Tibial artery (tissue), 4 donors: ENCODE measurements at regions of chr11 and their contacts with region 1.

Region 1: DNA sequence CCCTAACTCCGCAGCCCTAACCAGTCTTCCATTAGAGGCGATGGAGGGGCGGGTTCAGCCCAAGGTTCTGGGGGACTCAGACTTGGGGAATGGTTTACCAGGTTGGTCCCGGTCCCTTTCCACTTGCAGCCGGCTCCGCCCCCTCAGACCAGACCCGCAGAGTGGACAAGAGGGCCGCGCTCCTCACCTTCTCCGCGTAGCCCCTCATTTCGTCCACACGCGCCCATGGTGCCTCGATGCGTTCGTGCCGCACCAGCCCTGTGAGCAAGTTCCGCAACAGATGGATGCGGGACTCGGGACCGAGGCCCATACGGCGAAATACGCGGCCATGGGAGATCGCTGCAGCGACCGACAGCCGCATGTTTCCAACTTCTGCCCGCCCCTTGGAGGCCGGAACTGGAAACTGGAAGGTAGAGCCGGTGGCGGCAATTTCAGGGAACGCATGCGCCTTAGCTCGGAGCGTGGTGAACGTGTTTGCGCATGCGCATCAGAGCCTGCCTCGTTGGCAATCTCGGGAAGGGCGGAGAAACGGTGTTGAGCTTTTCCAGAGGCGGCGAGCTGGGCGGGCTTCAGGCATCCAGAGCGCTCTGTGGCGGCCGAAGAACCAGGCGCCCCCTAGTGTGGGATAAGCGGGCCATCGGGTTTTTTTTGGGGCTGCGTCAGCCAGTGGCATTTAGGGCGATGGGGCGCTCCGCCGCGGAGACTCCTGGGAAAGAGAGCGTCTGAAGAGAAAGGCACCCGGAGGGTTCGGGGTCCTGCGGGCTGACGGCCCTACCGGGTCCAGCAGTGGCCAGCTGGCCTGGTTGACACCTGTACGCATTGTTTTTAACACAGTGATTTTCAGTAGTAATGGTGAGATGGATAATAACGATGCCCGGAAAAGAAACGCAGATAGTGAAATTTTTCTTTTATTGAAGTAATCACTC is at the start of gene MRPL17:
- DNase-seq: peak; percentile 98 to 100
- H3K4me3 ChIP-seq: peak within 1 kb of the TSS; percentile 76 to 93
- H3K27ac ChIP-seq: peak within 1 kb of the TSS; percentile 89 to 94
- H3K4me1 ChIP-seq: peaks cover 0 to 24% (median 20%) of the 10 kb centered on the region in 4 donors
- H3K27me3 ChIP-seq: no peaks in the 10 kb centered on the region
- CTCF ChIP-seq: peak; percentile 88 to 93

Region 2: DNA sequence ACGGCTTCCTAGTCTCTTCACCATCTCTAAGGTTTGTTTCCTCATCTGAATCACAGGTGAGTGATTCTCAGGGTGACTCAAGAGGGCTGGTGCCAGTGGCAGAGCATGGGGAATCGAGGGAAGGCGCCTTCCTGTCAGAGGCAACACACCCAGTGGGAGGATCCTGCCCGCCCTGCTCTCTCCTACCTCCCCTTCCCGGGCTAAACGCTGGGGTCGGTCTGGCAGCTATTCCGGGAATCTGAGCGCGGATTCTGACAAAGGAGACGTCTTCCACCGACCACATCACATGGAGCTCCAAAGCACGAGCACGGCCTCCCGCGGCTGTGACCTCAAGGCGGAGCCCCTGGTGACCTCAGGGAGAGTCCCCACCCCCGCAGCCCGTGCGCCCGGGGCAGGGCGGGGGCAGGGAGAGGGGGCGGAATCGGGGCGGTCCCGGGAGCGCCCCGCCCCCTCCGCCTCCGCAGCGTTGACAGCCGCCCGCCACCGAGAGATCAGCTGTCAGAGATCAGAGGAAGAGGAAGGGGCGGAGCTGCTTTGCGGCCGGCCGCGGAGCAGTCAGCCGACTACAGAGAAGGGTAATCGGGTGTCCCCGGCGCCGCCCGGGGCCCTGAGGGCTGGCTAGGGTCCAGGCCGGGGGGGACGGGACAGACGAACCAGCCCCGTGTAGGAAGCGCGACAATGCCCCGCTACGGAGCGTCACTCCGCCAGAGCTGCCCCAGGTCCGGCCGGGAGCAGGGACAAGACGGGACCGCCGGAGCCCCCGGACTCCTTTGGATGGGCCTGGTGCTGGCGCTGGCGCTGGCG is 293.1 kb before region 1 on chr11 and contains the start of gene SMPD1:
- intact Hi-C with region 1: loop called (anchors 10 kb)
- DNase-seq: peak; percentile 95 to 97
- H3K4me3 ChIP-seq: peak within 1 kb of the TSS; percentile 64 to 81
- H3K27ac ChIP-seq: peak within 1 kb of the TSS; percentile 81 to 92
- H3K4me1 ChIP-seq: peaks cover 0 to 23% (median 13%) of the 10 kb centered on the region in 4 donors
- H3K27me3 ChIP-seq: no peaks in the 10 kb centered on the region
- CTCF ChIP-seq: no peak

Region 3: GRCh38 chr11:6481924-6482275 is 201.3 kb before region 1 on chr11:
- intact Hi-C with region 1: no loop called
- DNase-seq: no peak
- H3K4me3 ChIP-seq: peak overlapping the region; percentile 73 to 88
- H3K27ac ChIP-seq: peak overlapping the region; percentile 88 to 91
- H3K4me1 ChIP-seq: peaks cover 0 to 35% (median 27%) of the 10 kb centered on the region in 4 donors
- H3K27me3 ChIP-seq: no peaks in the 10 kb centered on the region
- CTCF ChIP-seq: no peak

Region 4: GRCh38 chr11:6626971-6627761 is 56.0 kb before region 1 on chr11:
- intact Hi-C with region 1: loop called (anchors 1 kb)
- DNase-seq: no peak
- H3K4me3 ChIP-seq: no peak overlapping the region
- H3K27ac ChIP-seq: no peak overlapping the region
- H3K4me1 ChIP-seq: no peaks in the 10 kb centered on the region
- H3K27me3 ChIP-seq: no peaks in the 10 kb centered on the region
- CTCF ChIP-seq: no peak

Region 5: GRCh38 chr11:6794639-6795038 is 111.4 kb after region 1 on chr11:
- intact Hi-C with region 1: no loop called
- DNase-seq: no peak
- H3K4me3 ChIP-seq: no peak overlapping the region
- H3K27ac ChIP-seq: no peak overlapping the region
- H3K4me1 ChIP-seq: no peaks in the 10 kb centered on the region
- H3K27me3 ChIP-seq: no peaks in the 10 kb centered on the region
- CTCF ChIP-seq: no peak